IMR-90 (cell line): ENCODE measurements at regions of chr7 and their contacts with region 1.

Region 1: DNA sequence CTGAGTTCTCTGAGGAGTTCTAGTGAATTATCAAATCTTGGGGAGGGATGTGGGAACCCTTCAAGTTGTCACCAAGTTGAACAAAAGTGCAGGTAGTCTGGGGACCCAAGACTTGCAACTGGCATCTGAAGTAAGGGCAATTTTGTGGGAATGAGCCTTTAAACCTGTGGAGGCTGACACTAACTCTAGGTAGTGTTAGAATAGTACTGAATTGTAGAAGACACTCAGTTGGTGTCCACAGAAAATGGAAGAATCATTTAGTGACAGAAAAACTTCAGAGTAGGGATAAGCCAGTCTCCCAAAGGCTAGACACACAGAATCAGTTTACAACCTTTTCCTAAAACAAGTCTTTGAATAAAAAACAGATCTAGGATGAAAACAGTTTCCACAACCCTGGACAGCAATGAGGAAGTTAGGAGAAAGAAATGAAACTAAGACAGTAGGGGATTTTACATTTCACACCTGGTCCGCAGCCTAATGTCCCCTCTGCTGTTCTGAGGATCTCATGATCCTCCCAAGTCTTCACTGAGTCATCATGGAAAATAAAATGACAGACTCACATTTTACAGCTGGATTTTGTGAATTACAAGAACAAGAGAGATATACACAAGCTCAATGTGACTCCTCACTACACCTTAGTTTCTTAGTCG is 23.0 kb upstream of the ING3 start:
- DNase-seq: no peak
- ATAC-seq: no peak
- H3K4me3 ChIP-seq: no peak overlapping the region
- H3K27ac ChIP-seq: no peak overlapping the region
- H3K4me1 ChIP-seq: no peaks in the 10 kb centered on the region
- H3K27me3 ChIP-seq: no peaks in the 10 kb centered on the region
- CTCF ChIP-seq: no peak
- POLR2A ChIP-seq: no peak
- RAD21 ChIP-seq: no peak

Region 2: DNA sequence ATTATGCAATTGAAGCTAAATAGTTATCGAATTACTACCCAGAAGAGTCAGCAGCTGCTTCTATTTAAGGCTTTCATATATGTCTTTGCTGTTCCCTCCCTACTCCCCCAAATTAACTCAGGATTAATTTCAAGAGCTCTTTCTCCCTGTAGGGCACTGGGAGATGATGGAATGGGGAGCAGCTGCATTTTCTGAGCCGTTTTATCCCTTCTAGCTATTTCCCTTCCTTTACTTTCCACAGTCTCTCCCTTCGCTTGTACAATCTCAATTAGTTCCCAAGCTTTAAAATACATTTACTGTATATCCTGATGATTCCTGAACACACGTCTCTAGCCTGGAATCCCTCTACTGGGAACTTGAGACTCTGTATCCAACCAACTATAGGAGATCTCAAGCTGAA is 49.9 kb before region 1 on chr7:
- CTCF ChIA-PET with region 1: no interaction called
- POLR2A ChIA-PET with region 1: no interaction called
- dilution Hi-C with region 1: no loop called
- in situ Hi-C with region 1: no loop called
- intact Hi-C with region 1: loop called (anchors 5 kb)
- DNase-seq: no peak
- ATAC-seq: peak; percentile 46; the same call in 1 of the 2 replicates
- H3K4me3 ChIP-seq: no peak overlapping the region
- H3K27ac ChIP-seq: no peak overlapping the region
- H3K4me1 ChIP-seq: no peaks in the 10 kb centered on the region
- H3K27me3 ChIP-seq: peaks cover 2% of the 10 kb centered on the region
- CTCF ChIP-seq: no peak
- POLR2A ChIP-seq: no peak
- RAD21 ChIP-seq: no peak

Region 3: GRCh38 chr7:121575194-121575765 is 647.7 kb after region 1 on chr7:
- CTCF ChIA-PET with region 1: no interaction called
- POLR2A ChIA-PET with region 1: no interaction called
- dilution Hi-C with region 1: no loop called
- in situ Hi-C with region 1: no loop called
- intact Hi-C with region 1: no loop called
- DNase-seq: no peak
- ATAC-seq: no peak
- H3K4me3 ChIP-seq: no peak overlapping the region
- H3K27ac ChIP-seq: no peak overlapping the region
- H3K4me1 ChIP-seq: peaks cover 2% of the 10 kb centered on the region; the same call in 1 of the 2 replicates
- H3K27me3 ChIP-seq: peaks cover 7% of the 10 kb centered on the region
- CTCF ChIP-seq: no peak
- POLR2A ChIP-seq: no peak
- RAD21 ChIP-seq: no peak